ENCODE measurements at regions of chr3 and their contacts with region 1.

Region 1: DNA sequence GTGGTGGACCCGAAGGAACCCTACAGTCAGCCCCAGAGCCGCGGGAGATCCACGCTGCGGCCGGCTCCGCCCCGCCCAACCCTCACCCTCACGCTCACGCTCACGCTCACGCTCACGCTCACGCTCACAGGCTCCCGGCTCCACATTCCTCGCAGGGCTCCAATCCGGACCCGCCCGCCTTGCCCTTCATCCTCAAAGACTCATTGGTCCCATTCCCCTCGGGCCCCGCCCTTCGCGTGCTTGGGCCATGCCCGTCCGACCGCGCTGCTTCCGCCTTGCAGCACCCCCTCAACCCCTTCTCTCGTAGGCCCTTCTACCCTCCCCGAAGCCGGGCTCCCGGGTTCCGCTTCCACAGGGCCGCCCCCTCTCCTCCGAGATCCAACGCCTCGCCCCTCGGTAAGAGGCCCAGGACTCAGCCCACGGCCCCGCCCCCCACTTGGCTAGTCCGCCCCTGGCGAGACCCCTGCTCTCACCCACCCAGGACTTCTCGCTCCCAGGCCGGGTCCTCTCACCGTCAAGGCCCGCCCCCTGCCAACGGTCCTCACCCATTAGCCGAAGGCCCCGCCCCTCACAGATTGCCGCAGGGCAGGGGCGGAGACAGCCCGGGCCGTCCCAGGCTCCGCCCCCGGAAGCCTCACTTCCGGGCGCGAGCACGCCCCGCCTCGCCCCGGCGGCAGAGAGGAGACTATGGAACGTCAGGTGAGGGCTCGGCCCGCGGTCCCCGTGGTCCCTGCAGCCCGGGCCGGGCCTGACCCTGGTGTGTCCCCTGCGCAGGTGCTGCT is at the start of gene APEH:
- DNase-seq: peak; percentile 99
- ATAC-seq: peak; percentile 91
- H3K4me3 Mint-ChIP-seq: peak within 1 kb of the TSS; percentile 88
- H3K27ac Mint-ChIP-seq: peak within 1 kb of the TSS; percentile 94
- H3K4me1 Mint-ChIP-seq: peaks cover 29% of the 10 kb centered on the region
- H3K27me3 Mint-ChIP-seq: no peaks in the 10 kb centered on the region
- total RNA-seq, gene APEH: 110 to 137 TPM

Region 2: DNA sequence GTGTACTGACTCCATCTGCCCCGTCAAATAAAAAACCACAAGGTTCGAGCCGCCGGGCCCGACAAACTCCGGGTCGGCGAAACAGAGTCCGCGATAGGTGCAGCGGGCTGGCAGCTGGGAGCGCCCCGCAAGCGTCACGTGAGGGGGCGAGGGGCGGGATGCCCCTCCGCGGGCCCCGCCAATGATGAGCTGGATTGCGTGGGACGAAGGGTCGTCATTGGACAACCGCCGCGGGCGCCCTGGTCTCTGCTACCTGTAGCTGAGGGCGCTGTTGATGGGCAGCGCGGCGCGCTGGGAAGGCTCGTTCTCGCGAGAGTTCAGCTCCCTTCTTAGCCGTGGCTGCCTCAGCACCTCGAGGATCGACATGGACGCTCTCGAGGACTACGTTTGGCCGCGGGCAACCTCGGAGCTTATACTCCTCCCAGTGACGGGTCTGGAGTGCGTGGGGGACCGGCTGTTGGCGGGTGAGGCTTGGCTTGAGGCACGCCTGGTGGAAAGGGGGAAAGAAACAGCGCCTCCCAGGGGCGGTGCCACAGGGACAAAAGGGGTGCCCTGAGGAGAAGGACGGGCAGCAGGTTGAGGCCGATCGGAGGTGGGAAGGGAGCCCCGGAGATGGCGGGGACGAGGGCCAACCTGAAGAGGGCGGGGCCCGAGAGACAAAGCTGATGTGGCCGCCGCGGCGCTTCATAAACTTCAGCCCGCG is 666.7 kb before region 1 on chr3 and contains the start of gene WDR6:
- CTCF ChIA-PET with region 1: no interaction called
- POLR2A ChIA-PET with region 1: no interaction called
- intact Hi-C with region 1: loop called in 1 of 2 experiments (anchors 1 kb)
- DNase-seq: peak; percentile 99
- ATAC-seq: peak; percentile 90
- H3K4me3 Mint-ChIP-seq: peak within 1 kb of the TSS; percentile 100
- H3K27ac Mint-ChIP-seq: peak within 1 kb of the TSS; percentile 100
- H3K4me1 Mint-ChIP-seq: peaks cover 16% of the 10 kb centered on the region
- H3K27me3 Mint-ChIP-seq: no peaks in the 10 kb centered on the region
- total RNA-seq, gene WDR6: 109 to 127 TPM

Region 3: DNA sequence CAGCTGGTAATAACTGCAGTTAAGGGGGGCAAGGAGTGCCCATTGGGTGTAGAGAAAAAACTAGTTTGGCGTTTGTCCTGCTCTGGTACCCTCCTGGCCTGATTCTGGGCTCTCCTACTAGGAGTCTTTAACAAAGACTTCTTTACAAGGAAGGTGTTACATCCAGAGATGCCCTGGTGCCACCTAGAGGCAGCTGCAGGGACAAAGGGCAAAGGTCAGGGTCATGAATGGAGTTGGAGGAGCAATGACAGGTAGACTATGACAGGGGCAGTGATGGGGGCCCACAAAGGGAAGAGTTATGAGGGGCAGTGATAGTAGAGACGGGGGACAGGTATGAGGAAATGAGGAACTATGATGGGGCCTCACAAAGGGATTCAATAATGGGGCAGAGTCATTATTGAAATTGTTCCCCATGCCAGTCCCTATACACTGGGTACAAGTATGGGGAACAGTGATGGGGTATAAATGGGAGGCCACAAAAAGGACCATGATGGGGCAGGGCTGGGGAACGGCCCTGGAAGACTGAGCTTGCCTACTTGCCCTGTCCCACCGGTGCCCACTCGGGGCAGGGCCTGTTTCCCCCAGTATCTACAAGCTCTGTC is 515.7 kb before region 1 on chr3:
- CTCF ChIA-PET with region 1: no interaction called
- POLR2A ChIA-PET with region 1: no interaction called
- intact Hi-C with region 1: no loop called
- DNase-seq: peak; percentile 81
- ATAC-seq: peak; percentile 82
- H3K4me3 Mint-ChIP-seq: no peak overlapping the region
- H3K27ac Mint-ChIP-seq: no peak overlapping the region
- H3K4me1 Mint-ChIP-seq: peaks cover 14% of the 10 kb centered on the region
- H3K27me3 Mint-ChIP-seq: no peaks in the 10 kb centered on the region

Region 4: GRCh38 chr3:49339945-49340800 is 333.7 kb before region 1 on chr3 and contains the start of gene USP4:
- CTCF ChIA-PET with region 1: no interaction called
- POLR2A ChIA-PET with region 1: no interaction called
- intact Hi-C with region 1: loop called in 1 of 2 experiments (anchors 1 kb)
- DNase-seq: peak; percentile 97
- ATAC-seq: peak; percentile 89
- H3K4me3 Mint-ChIP-seq: peak within 1 kb of the TSS; percentile 99
- H3K27ac Mint-ChIP-seq: peak within 1 kb of the TSS; percentile 96
- H3K4me1 Mint-ChIP-seq: peaks cover 49% of the 10 kb centered on the region
- H3K27me3 Mint-ChIP-seq: no peaks in the 10 kb centered on the region
- total RNA-seq, gene USP4: 69.3 to 71.8 TPM

Region 5: GRCh38 chr3:49566312-49566711 is 107.6 kb before region 1 on chr3:
- CTCF ChIA-PET with region 1: interaction called, 6 read pairs
- POLR2A ChIA-PET with region 1: no interaction called
- intact Hi-C with region 1: loop called in 1 of 2 experiments (anchors 1 kb)
- DNase-seq: no peak
- ATAC-seq: peak; percentile 44
- H3K4me3 Mint-ChIP-seq: no peak overlapping the region
- H3K27ac Mint-ChIP-seq: no peak overlapping the region
- H3K4me1 Mint-ChIP-seq: no peaks in the 10 kb centered on the region
- H3K27me3 Mint-ChIP-seq: peaks cover 2% of the 10 kb centered on the region

Region 6: DNA sequence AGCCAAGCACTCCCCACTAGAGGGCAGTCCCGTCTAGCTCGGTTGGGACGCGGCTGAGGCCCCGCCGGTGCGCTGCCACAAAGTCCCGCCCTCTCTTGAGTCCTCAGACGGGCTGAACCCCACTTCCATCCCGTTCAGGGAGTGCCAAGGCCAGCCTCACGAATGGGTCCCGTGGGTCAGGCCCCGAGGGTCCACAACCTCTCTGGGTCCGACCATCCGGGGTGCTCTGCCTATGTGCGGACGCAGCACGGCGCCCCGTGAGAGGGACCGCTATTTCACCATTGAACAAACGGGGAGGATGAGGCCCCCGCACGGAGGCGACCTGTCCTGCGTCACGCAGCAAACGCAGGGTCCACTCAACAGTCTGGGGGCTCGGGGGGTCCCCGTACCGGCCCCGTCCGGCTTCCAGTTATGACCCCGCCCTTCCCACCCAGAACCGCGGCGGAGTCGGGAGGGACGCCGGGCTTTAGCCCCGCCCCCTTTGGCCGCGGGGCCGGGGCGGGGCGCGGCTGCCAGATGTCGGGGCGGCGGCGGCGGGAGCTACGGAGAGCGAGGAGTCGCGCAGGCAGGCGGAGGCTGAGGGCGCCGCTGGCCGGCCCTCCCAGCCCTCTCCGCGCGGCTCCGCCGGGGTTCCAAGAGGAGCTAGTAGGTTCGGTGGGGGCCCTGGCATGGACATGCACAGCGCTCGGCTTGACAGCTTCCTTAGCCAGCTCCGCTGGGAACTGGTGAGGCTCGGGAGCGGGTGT is 129.0 kb after region 1 on chr3 and contains the start of gene INKA1:
- CTCF ChIA-PET with region 1: no interaction called
- POLR2A ChIA-PET with region 1: no interaction called
- intact Hi-C with region 1: loop called in 1 of 2 experiments (anchors 1 kb)
- DNase-seq: peak; percentile 94
- ATAC-seq: peak; percentile 87
- H3K4me3 Mint-ChIP-seq: peak within 1 kb of the TSS; percentile 79
- H3K27ac Mint-ChIP-seq: peak within 1 kb of the TSS; percentile 55
- H3K4me1 Mint-ChIP-seq: peaks cover 40% of the 10 kb centered on the region
- H3K27me3 Mint-ChIP-seq: peaks cover 10% of the 10 kb centered on the region
- total RNA-seq, gene INKA1: 0.50 to 0.70 TPM

Region 7: DNA sequence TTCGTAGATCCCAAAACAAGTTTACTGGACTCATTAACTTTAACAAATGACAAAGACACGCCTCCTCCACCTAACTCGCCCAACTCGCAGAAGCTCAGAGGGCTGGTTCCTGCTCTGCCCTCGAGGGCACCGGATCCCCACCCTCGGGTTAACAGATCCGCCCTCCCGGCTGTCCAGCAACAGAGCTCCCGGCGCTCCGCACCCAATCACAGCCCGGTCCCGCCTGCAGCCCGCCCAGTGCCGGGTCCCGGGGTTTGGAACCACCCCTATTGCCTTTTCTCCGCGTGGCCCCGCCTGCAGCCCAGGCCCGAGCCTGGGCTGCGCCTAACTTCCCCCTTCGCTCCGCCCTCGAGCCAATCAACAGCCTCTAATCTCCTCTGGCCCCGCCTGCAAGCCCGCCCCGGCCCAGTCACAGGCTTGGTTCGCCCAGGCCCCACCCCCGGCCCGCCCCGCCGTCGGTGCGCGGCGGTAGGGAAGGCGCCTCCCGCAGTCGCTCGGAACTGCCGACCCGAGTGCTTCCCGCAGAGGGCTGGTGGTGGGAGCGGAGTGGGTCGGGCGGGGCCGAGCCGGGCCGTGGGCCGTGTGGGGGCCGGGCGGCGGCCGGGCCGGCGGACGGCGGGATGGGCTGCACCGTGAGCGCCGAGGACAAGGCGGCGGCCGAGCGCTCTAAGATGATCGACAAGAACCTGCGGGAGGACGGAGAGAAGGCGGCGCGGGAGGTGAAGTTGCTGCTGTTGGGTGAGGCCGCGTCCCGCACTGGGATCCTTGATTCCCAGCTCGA is 562.0 kb after region 1 on chr3 and contains the start of gene GNAI2:
- CTCF ChIA-PET with region 1: interaction called, 3 read pairs
- POLR2A ChIA-PET with region 1: no interaction called
- intact Hi-C with region 1: loop called in 1 of 2 experiments (anchors 5 kb)
- DNase-seq: peak; percentile 99
- ATAC-seq: peak; percentile 92
- H3K4me3 Mint-ChIP-seq: peak within 1 kb of the TSS; percentile 90
- H3K27ac Mint-ChIP-seq: peak within 1 kb of the TSS; percentile 96
- H3K4me1 Mint-ChIP-seq: peaks cover 31% of the 10 kb centered on the region
- H3K27me3 Mint-ChIP-seq: no peaks in the 10 kb centered on the region
- total RNA-seq, gene GNAI2: 280 to 341 TPM